Endothelial cell of umbilical vein (primary cell): ENCODE measurements at regions of chr18 and their contacts with region 1.

Region 1: GRCh38 chr18:58117786-58118403 is 73.9 kb downstream of the NEDD4L start:
- DNase-seq: peak; percentile 96
- H3K4me3 ChIP-seq: no peak overlapping the region
- H3K27ac ChIP-seq: peak overlapping the region; percentile 48
- H3K4me1 ChIP-seq: peaks cover 9% of the 10 kb centered on the region
- H3K27me3 ChIP-seq: no peaks in the 10 kb centered on the region
- CTCF ChIP-seq: no peak
- POLR2A ChIP-seq: no peak

Region 2: GRCh38 chr18:57547260-57547659 is 570.6 kb before region 1 on chr18:
- CTCF ChIA-PET with region 1: no interaction called
- POLR2A ChIA-PET with region 1: no interaction called
- dilution Hi-C with region 1: no loop called
- intact Hi-C with region 1: no loop called
- DNase-seq: no peak
- H3K4me3 ChIP-seq: no peak overlapping the region
- H3K27ac ChIP-seq: no peak overlapping the region
- H3K4me1 ChIP-seq: no peaks in the 10 kb centered on the region
- H3K27me3 ChIP-seq: no peaks in the 10 kb centered on the region
- CTCF ChIP-seq: no peak
- POLR2A ChIP-seq: no peak

Region 3: DNA sequence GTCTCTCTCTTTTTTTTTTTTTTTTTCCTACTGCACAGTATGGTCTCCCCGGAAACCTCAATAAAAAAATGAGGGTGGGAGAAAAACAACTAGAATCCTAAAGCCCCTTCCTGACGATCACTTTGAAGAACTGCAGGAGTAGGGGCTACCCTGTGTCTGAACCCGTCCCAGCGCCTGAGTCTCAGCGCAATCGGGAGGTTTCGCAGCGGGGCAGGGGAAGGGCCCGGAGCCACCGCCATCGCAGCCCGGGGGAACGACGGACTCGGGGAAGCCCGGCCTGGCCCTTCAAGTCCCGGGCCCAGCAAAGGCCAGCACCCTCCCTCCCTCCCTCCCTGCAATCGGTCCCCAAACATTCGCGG is 496.7 kb before region 1 on chr18:
- CTCF ChIA-PET with region 1: interaction called, 21 read pairs
- POLR2A ChIA-PET with region 1: no interaction called
- dilution Hi-C with region 1: no loop called
- intact Hi-C with region 1: loop called (anchors 2 kb)
- DNase-seq: peak; percentile 31
- H3K4me3 ChIP-seq: peak overlapping the region; percentile 52 to 82 (median 67)
- H3K27ac ChIP-seq: peak overlapping the region; percentile 62
- H3K4me1 ChIP-seq: peaks cover 12% of the 10 kb centered on the region
- H3K27me3 ChIP-seq: no peaks in the 10 kb centered on the region
- CTCF ChIP-seq: no peak
- POLR2A ChIP-seq: no peak

Region 4: DNA sequence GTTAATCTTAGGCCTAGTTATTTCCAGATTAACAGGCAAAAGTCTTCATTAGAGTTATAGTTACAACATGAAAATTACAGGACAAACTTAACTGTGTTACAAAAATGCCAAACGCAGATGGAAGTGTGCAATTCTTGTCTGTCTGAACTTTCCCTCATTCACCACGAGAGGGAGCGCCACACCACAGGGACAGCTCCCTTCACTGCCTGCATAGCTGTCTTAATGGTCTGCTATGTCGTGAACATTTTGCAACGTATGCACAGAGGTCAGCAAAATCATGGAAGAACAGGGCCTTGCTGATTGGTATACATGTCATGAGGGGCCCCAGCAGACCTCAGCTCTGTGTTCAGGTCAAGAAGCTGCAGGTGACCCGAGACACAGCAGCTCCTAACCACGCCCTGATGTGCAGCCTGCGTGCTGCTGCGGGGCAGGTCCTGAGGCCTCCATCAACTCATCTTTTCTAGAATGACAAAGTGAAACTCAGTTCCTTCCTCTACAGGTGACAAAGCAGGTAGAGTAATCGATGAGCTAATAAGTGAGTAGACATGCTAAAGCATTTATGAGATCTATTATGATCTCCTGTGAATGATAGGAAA is 236.0 kb before region 1 on chr18:
- CTCF ChIA-PET with region 1: interaction called, 57 read pairs
- POLR2A ChIA-PET with region 1: no interaction called
- dilution Hi-C with region 1: no loop called
- intact Hi-C with region 1: loop called (anchors 1 kb)
- DNase-seq: peak; percentile 83
- H3K4me3 ChIP-seq: no peak overlapping the region
- H3K27ac ChIP-seq: no peak overlapping the region
- H3K4me1 ChIP-seq: no peaks in the 10 kb centered on the region
- H3K27me3 ChIP-seq: no peaks in the 10 kb centered on the region
- CTCF ChIP-seq: peak; percentile 85 to 91
- POLR2A ChIP-seq: no peak

Region 5: DNA sequence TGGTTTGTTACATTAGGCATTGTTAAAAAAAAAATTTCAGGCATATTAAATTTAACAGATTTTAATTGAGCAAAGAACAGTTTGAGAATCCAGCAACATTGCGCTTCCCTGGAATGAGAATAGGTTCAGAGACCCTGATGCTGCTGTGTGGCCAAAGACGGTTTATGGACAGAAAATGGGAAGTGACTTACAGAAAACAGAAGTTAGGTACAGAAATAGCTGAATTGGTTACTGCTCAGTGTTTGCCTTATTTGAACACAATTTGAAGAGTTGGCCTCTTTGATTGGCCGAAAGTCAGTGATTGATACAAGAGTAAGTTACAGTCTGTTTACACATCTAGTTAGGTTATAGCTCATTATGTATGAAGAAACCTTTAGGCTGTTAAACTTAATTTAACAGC is 79.8 kb before region 1 on chr18:
- CTCF ChIA-PET with region 1: interaction called, 132 read pairs
- POLR2A ChIA-PET with region 1: no interaction called
- dilution Hi-C with region 1: no loop called
- intact Hi-C with region 1: loop called (anchors 1 kb)
- DNase-seq: no peak
- H3K4me3 ChIP-seq: no peak overlapping the region
- H3K27ac ChIP-seq: no peak overlapping the region
- H3K4me1 ChIP-seq: peaks cover 3% of the 10 kb centered on the region
- H3K27me3 ChIP-seq: peaks cover under 1 to 5% of the 10 kb centered on the region in 2 experiments
- CTCF ChIP-seq: no peak
- POLR2A ChIP-seq: no peak

Region 6: GRCh38 chr18:58051765-58052460 is 66.0 kb before region 1 on chr18:
- CTCF ChIA-PET with region 1: interaction called, 144 read pairs
- POLR2A ChIA-PET with region 1: no interaction called
- dilution Hi-C with region 1: no loop called
- intact Hi-C with region 1: no loop called
- DNase-seq: peak; percentile 55
- H3K4me3 ChIP-seq: no peak overlapping the region
- H3K27ac ChIP-seq: no peak overlapping the region
- H3K4me1 ChIP-seq: no peaks in the 10 kb centered on the region
- H3K27me3 ChIP-seq: no peaks in the 10 kb centered on the region
- CTCF ChIP-seq: peak; percentile 18 to 21
- POLR2A ChIP-seq: no peak

Region 7: GRCh38 chr18:58135701-58136331 is 17.9 kb after region 1 on chr18:
- CTCF ChIA-PET with region 1: interaction called, 27 read pairs
- POLR2A ChIA-PET with region 1: no interaction called
- dilution Hi-C with region 1: no loop called
- intact Hi-C with region 1: no loop called
- DNase-seq: peak; percentile 69
- H3K4me3 ChIP-seq: no peak overlapping the region
- H3K27ac ChIP-seq: no peak overlapping the region
- H3K4me1 ChIP-seq: peaks cover 2% of the 10 kb centered on the region
- H3K27me3 ChIP-seq: no peaks in the 10 kb centered on the region
- CTCF ChIP-seq: peak; percentile 85 to 91
- POLR2A ChIP-seq: no peak